ENCODE measurements at regions of chr13 and their contacts with region 1.

Region 1: GRCh38 chr13:45367358-45367757 is 26.4 kb upstream of the TPT1 start:
- DNase-seq: peak; percentile 69 to 96 (median 88)
- ATAC-seq: peak; percentile 99
- H3K4me3 ChIP-seq: no peak overlapping the region
- H3K4me3 Mint-ChIP-seq: peak overlapping the region; percentile 30
- H3K27ac ChIP-seq: peak overlapping the region; percentile 21 to 72
- H3K27ac Mint-ChIP-seq: peak overlapping the region; percentile 79
- H3K4me1 ChIP-seq: peaks cover 38% of the 10 kb centered on the region
- H3K4me1 Mint-ChIP-seq: peaks cover 53% of the 10 kb centered on the region
- H3K27me3 ChIP-seq: no peaks in the 10 kb centered on the region
- H3K27me3 Mint-ChIP-seq: no peaks in the 10 kb centered on the region
- CTCF ChIP-seq: no peak

Region 2: DNA sequence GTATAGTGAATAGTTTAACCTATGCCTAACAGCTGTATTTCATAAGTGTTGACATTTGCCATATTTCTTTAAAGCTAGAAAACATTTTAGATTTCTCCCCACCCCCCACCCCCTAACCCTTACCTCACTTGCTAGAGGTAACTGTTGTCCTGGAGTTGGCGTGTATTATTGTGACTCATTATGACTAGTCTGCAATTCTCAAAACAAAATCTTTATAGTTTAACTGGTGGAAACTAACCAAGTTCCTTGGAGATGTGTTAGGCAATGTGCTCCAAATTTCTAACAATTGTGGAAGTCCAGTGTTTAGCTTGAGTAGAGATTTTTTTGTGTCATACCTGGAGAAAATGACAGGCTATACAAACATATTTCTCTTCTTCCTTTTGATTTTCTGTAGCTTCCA is 204.5 kb before region 1 on chr13:
- CTCF ChIA-PET with region 1: no interaction called
- POLR2A ChIA-PET with region 1: no interaction called
- intact Hi-C with region 1: no loop called
- DNase-seq: no peak
- ATAC-seq: no peak
- H3K4me3 ChIP-seq: no peak overlapping the region
- H3K4me3 Mint-ChIP-seq: no peak overlapping the region
- H3K27ac ChIP-seq: no peak overlapping the region
- H3K27ac Mint-ChIP-seq: no peak overlapping the region
- H3K4me1 ChIP-seq: no peaks in the 10 kb centered on the region
- H3K4me1 Mint-ChIP-seq: no peaks in the 10 kb centered on the region
- H3K27me3 ChIP-seq: no peaks in the 10 kb centered on the region
- H3K27me3 Mint-ChIP-seq: no peaks in the 10 kb centered on the region
- CTCF ChIP-seq: no peak

Region 3: GRCh38 chr13:45310341-45311125 is 56.8 kb before region 1 on chr13:
- CTCF ChIA-PET with region 1: no interaction called
- POLR2A ChIA-PET with region 1: no interaction called
- intact Hi-C with region 1: no loop called
- DNase-seq: no peak
- ATAC-seq: no peak
- H3K4me3 ChIP-seq: peak overlapping the region; percentile 63
- H3K4me3 Mint-ChIP-seq: peak overlapping the region; percentile 85
- H3K27ac ChIP-seq: no peak overlapping the region
- H3K27ac Mint-ChIP-seq: no peak overlapping the region
- H3K4me1 ChIP-seq: peaks cover 24% of the 10 kb centered on the region
- H3K4me1 Mint-ChIP-seq: peaks cover 20% of the 10 kb centered on the region
- H3K27me3 ChIP-seq: no peaks in the 10 kb centered on the region
- H3K27me3 Mint-ChIP-seq: peaks cover 8% of the 10 kb centered on the region
- CTCF ChIP-seq: no peak

Region 4: GRCh38 chr13:45332036-45332830 is 35.1 kb before region 1 on chr13:
- CTCF ChIA-PET with region 1: no interaction called
- POLR2A ChIA-PET with region 1: interaction called, 10 read pairs
- intact Hi-C with region 1: loop called in 1 of 2 experiments (anchors 5 kb)
- DNase-seq: peak in 1 of 14 experiments; percentile 18
- ATAC-seq: no peak
- H3K4me3 ChIP-seq: no peak overlapping the region
- H3K4me3 Mint-ChIP-seq: no peak overlapping the region
- H3K27ac ChIP-seq: no peak overlapping the region
- H3K27ac Mint-ChIP-seq: peak overlapping the region; percentile 84
- H3K4me1 ChIP-seq: peaks cover 84% of the 10 kb centered on the region
- H3K4me1 Mint-ChIP-seq: peaks cover 94% of the 10 kb centered on the region
- H3K27me3 ChIP-seq: no peaks in the 10 kb centered on the region
- H3K27me3 Mint-ChIP-seq: no peaks in the 10 kb centered on the region
- CTCF ChIP-seq: no peak

Region 5: GRCh38 chr13:45356966-45357672 is 10.2 kb before region 1 on chr13:
- CTCF ChIA-PET with region 1: interaction called, 3 read pairs
- POLR2A ChIA-PET with region 1: interaction called, 12 read pairs
- intact Hi-C with region 1: no loop called
- DNase-seq: no peak
- ATAC-seq: no peak
- H3K4me3 ChIP-seq: no peak overlapping the region
- H3K4me3 Mint-ChIP-seq: no peak overlapping the region
- H3K27ac ChIP-seq: no peak overlapping the region
- H3K27ac Mint-ChIP-seq: peak overlapping the region; percentile 79
- H3K4me1 ChIP-seq: no peaks in the 10 kb centered on the region
- H3K4me1 Mint-ChIP-seq: peaks cover 17% of the 10 kb centered on the region
- H3K27me3 ChIP-seq: no peaks in the 10 kb centered on the region
- H3K27me3 Mint-ChIP-seq: no peaks in the 10 kb centered on the region
- CTCF ChIP-seq: no peak

Region 6: DNA sequence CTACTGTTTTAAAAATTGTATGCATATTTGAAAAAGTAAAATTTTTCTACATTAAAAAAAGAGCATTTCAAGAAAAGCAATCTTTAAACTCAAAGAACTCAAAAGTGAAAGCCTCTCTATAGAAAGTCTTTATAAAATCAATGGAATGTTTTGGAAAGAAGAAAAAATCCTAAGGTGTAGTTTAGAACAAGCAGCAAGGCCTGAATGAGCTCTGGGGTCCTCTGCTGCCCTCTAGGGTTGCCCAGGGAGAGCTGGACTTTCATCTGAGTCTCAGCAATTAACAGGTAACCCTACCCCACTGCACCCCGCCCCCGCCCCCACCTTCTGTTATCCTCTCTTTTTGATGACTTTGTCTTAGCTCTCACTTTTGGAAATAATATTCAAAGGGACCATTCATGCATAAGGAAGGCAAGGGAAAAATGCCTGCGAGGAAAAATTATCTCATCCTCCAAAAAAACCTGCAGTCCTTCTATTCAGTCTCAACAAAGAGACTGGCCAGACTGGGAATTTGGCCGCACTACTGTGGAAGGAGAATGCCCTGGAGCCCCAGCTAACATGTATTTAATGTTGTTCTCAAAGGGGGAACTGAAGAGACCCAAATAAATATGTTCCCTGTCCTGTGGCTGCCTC is 26.7 kb after region 1 on chr13:
- CTCF ChIA-PET with region 1: interaction called, 27 read pairs
- POLR2A ChIA-PET with region 1: interaction called, 29 read pairs
- intact Hi-C with region 1: no loop called
- DNase-seq: peak in 8 of 14 experiments; percentile 13 to 71 (median 43)
- ATAC-seq: no peak
- H3K4me3 ChIP-seq: no peak overlapping the region
- H3K4me3 Mint-ChIP-seq: no peak overlapping the region
- H3K27ac ChIP-seq: no peak overlapping the region
- H3K27ac Mint-ChIP-seq: peak overlapping the region; percentile 86
- H3K4me1 ChIP-seq: peaks cover 32% of the 10 kb centered on the region
- H3K4me1 Mint-ChIP-seq: peaks cover 48% of the 10 kb centered on the region
- H3K27me3 ChIP-seq: no peaks in the 10 kb centered on the region
- H3K27me3 Mint-ChIP-seq: no peaks in the 10 kb centered on the region
- CTCF ChIP-seq: peak; percentile 70

Region 7: GRCh38 chr13:45417790-45418534 is 50.6 kb after region 1 on chr13 and contains the start of gene SLC25A30:
- CTCF ChIA-PET with region 1: interaction called, 13 read pairs
- POLR2A ChIA-PET with region 1: interaction called, 36 read pairs
- intact Hi-C with region 1: loop called (anchors 1 to 5 kb)
- DNase-seq: peak; percentile 80 to 96 (median 90)
- ATAC-seq: peak; percentile 89
- H3K4me3 ChIP-seq: peak within 1 kb of the TSS; percentile 90
- H3K4me3 Mint-ChIP-seq: peak within 1 kb of the TSS; percentile 97
- H3K27ac ChIP-seq: peak within 1 kb of the TSS; percentile 68 to 82
- H3K27ac Mint-ChIP-seq: peak within 1 kb of the TSS; percentile 94
- H3K4me1 ChIP-seq: peaks cover 34% of the 10 kb centered on the region
- H3K4me1 Mint-ChIP-seq: peaks cover 30% of the 10 kb centered on the region
- H3K27me3 ChIP-seq: no peaks in the 10 kb centered on the region
- H3K27me3 Mint-ChIP-seq: no peaks in the 10 kb centered on the region
- CTCF ChIP-seq: no peak
- total RNA-seq, gene SLC25A30: 23.2 to 28.6 TPM

Region 8: DNA sequence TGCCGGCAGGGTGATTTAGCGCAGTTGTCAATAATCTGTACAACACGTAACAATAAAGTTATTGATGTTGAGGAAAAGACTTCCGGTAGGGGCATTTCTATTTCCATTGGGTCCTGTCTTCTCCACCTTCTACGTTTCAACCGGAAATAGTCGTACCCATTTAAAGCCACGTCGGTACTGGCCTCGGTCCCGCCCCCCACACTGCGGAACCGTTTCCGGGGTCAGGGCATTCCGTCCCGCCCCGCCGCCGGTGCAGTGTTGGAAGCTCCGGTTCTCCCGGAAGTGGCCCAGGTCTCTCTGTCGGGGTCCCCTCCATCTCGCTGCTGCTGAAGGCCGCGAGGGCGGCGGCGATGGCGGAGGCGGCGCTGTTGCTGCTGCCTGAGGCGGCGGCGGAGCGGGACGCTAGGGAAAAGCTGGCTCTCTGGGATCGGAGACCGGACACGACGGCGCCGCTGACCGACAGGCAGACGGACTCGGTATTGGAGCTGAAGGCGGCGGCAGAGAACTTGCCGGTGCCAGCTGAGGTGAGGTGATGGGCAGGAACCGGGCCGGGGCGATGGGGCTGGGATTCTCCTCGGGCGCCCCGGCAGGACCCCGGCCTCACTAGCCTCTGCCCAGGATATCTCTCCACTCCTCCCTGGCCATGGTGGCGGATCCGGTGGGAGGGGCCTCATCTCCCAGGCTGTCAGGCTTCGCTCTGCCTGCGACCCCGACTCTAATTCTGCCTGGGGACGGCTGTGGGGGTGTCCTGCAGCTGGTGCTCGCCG is 97.5 kb after region 1 on chr13 and contains the start of gene COG3:
- CTCF ChIA-PET with region 1: interaction called, 12 read pairs
- POLR2A ChIA-PET with region 1: interaction called, 15 read pairs
- intact Hi-C with region 1: loop called (anchors 1 to 10 kb)
- DNase-seq: peak; percentile 88 to 98 (median 93)
- ATAC-seq: peak; percentile 93
- H3K4me3 ChIP-seq: peak within 1 kb of the TSS; percentile 94
- H3K4me3 Mint-ChIP-seq: peak within 1 kb of the TSS; percentile 84
- H3K27ac ChIP-seq: peak within 1 kb of the TSS; percentile 78 to 97
- H3K27ac Mint-ChIP-seq: peak within 1 kb of the TSS; percentile 85
- H3K4me1 ChIP-seq: peaks cover 30% of the 10 kb centered on the region
- H3K4me1 Mint-ChIP-seq: peaks cover 60% of the 10 kb centered on the region
- H3K27me3 ChIP-seq: no peaks in the 10 kb centered on the region
- H3K27me3 Mint-ChIP-seq: no peaks in the 10 kb centered on the region
- CTCF ChIP-seq: peak; percentile 50
- total RNA-seq, gene COG3: 52.8 to 57.0 TPM

Region 9: DNA sequence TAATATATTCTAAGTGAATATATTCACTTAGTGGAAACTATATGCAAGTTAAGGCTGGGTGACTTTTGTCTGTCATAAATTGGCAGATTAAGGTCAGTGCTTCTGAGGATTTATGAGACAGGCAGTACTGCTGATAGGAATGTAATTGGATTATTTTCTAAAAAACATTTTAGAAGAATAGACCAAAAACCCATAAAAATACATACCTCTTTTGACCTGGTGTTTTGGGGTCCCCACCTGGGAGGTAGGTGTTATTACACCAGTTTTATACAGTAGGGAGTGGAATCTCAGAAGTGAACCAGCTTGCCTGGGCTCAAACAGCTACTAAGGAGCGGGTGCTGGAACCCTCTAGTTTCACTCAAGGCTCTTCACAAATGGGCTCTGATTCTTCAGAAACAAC is 122.7 kb after region 1 on chr13:
- CTCF ChIA-PET with region 1: interaction called, 11 read pairs
- POLR2A ChIA-PET with region 1: no interaction called
- intact Hi-C with region 1: loop called (anchors 2 kb)
- DNase-seq: peak in 6 of 14 experiments; percentile 2 to 58 (median 39)
- ATAC-seq: peak; percentile 89
- H3K4me3 ChIP-seq: no peak overlapping the region
- H3K4me3 Mint-ChIP-seq: no peak overlapping the region
- H3K27ac ChIP-seq: no peak overlapping the region
- H3K27ac Mint-ChIP-seq: no peak overlapping the region
- H3K4me1 ChIP-seq: no peaks in the 10 kb centered on the region
- H3K4me1 Mint-ChIP-seq: no peaks in the 10 kb centered on the region
- H3K27me3 ChIP-seq: no peaks in the 10 kb centered on the region
- H3K27me3 Mint-ChIP-seq: no peaks in the 10 kb centered on the region
- CTCF ChIP-seq: peak; percentile 66

Region 10: DNA sequence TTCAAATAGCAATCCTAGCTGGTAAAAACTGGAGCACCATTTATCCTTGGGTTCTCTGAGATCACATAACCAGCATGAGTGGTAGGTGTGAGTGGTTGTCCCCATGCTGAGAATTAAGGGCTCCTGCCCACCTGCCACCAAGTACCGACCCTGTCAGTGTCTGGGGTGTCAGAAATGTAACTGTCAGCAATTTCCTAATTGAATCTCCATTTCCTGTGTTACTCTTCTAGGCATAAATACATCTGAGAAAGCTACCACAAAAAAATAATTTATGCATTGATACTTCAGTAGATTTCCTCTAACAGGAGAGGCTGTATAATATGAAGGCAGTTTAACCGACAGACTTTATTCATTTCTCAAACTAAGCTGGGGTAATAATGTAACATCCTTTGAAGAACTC is 712.4 kb after region 1 on chr13:
- CTCF ChIA-PET with region 1: no interaction called
- POLR2A ChIA-PET with region 1: no interaction called
- intact Hi-C with region 1: no loop called
- DNase-seq: peak in 1 of 14 experiments; percentile 10
- ATAC-seq: no peak
- H3K4me3 ChIP-seq: no peak overlapping the region
- H3K4me3 Mint-ChIP-seq: no peak overlapping the region
- H3K27ac ChIP-seq: no peak overlapping the region
- H3K27ac Mint-ChIP-seq: no peak overlapping the region
- H3K4me1 ChIP-seq: no peaks in the 10 kb centered on the region
- H3K4me1 Mint-ChIP-seq: peaks cover 13% of the 10 kb centered on the region
- H3K27me3 ChIP-seq: no peaks in the 10 kb centered on the region
- H3K27me3 Mint-ChIP-seq: no peaks in the 10 kb centered on the region
- CTCF ChIP-seq: no peak